ENCODE measurements at regions of chr6 and their contacts with region 1.

Region 1: DNA sequence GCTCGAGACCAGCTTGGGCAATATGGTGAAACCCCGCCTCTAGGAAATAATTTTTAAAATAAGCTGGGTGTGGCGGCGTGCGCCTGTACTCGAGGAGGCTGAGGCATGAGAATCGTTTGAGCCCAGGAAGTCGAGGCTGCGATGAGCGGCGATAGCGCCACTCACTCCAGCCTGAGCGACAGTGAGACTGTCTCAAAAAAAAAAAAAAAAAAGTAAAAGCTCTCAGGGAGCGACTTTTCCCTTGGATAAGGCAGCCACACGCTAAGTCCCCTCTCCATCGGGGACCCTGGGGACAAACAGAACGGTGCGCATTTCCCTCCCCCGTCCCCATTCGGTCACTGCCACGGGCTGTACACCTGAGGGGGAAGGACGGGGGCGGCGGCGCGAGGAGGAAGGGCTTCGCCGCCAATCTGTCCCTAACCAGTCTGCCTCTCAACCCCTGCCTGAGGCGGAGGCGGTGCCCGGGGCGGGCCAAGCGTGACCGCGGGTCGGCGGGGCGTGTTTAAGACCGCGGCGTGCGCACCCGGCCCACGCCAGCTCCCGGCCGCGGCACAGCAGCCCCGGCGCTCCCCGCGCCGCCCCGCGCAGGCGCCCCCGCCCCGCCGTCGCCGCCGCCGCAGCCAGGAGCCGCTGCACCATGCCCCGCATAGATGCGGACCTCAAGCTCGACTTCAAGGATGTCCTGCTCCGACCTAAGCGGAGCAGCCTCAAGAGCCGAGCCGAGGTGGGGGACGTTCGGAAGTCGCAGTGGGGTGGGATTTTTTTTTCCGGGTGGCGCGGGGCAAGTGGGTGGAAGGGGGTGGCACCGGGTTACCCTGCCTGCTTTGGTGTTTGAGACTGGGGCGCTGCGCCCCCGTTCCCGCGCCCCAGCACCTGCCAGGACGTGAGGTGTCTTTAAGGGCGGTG is at the start of gene GMPR:
- DNase-seq: no peak
- H3K4me3 Mint-ChIP-seq: peak within 1 kb of the TSS; percentile 79
- H3K27ac Mint-ChIP-seq: peak within 1 kb of the TSS; percentile 87
- H3K4me1 Mint-ChIP-seq: peaks cover 32% of the 10 kb centered on the region
- H3K27me3 Mint-ChIP-seq: no peaks in the 10 kb centered on the region
- CTCF ChIP-seq: no peak
- total RNA-seq, gene GMPR: 1.9 and 3.0 TPM in 2 replicates

Region 2: GRCh38 chr6:16206595-16207037 is 31.7 kb before region 1 on chr6:
- CTCF ChIA-PET with region 1: interaction called, 19 read pairs
- POLR2A ChIA-PET with region 1: no interaction called
- intact Hi-C with region 1: no loop called
- DNase-seq: peak; percentile 60
- H3K4me3 Mint-ChIP-seq: no peak overlapping the region
- H3K27ac Mint-ChIP-seq: no peak overlapping the region
- H3K4me1 Mint-ChIP-seq: peaks cover 4% of the 10 kb centered on the region
- H3K27me3 Mint-ChIP-seq: peaks cover 13% of the 10 kb centered on the region
- CTCF ChIP-seq: peak; percentile 76

Region 3: DNA sequence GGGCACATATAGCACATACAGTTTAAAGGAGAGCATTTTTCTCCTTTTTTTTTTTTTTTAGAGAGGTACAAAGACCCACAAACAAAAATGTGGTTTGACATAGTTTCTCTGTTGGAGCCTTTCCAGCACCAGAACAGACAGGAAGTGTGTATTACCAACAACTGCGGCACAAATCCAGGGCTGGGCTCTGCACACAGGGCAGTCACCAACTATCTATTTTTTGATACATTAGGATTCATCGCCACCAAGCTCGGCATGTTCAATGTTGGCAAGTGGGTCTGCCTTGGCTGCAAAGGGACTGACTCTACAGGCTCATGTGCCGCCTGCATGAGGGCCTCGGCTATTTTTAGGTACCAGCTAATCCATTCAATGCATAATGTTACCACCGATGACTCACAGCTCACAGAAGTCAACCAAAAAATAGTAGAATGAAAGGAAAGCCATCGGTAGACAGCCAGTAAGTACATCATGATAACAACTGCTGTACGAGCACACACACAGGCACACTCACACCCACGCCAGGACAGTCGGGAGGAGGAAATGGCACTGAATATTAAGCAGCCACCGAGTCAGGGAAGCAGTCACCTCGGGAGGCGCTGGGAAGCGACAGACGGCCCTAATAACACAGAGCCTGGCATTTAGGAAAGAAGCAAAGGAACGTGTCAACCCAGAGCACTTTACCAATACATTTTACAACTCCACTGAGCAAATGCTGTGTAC is 81.7 kb after region 1 on chr6:
- CTCF ChIA-PET with region 1: interaction called, 4 read pairs
- POLR2A ChIA-PET with region 1: no interaction called
- intact Hi-C with region 1: loop called (anchors 5 kb)
- DNase-seq: peak; percentile 81
- H3K4me3 Mint-ChIP-seq: peak overlapping the region; percentile 51
- H3K27ac Mint-ChIP-seq: no peak overlapping the region
- H3K4me1 Mint-ChIP-seq: peaks cover 23% of the 10 kb centered on the region
- H3K27me3 Mint-ChIP-seq: no peaks in the 10 kb centered on the region
- CTCF ChIP-seq: no peak

Region 4: DNA sequence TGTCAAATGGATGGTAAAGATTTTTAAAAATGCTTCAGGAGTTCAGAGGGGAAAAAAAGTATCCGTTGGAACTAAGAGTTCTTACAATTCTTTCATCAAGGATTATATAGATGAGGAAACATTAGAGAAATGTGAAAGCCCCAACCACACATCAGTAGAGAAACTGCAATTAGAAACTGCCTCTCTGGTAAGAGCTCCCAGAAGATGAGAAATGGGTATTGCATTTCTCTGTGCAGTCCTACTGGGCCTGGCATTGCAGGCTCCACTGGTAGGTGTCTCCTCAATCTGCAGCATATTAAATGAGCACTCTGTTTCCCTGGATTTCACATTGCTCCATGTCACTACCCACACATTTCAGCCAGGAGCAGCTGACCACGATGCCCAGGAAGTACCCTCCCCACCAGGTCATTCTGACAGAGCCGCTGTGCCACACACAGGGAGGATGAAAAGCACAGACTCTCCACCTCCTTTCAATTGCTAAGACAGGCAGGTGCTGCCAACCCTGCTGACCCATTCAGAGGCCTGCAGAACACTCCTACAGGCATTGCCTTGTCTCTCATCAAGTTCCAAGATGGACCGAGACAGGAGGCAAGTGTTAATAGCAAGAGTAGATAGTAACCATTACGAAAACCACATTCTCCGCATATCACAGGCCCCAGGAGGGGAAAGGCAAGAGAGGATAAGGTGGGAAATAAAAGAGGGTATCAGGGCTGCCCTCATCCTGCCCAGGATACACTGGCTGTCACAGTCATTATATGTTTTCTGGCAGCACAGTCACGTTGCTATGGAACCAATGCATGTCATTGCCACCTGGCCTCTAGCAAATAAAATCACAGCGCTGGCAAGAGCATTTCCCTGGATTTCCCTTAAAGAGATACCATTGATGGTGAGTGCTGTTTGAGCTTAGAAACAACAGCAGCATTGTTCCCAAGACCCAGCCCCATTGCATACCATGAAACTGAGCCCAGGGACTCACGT is 281.2 kb after region 1 on chr6:
- CTCF ChIA-PET with region 1: no interaction called
- POLR2A ChIA-PET with region 1: no interaction called
- intact Hi-C with region 1: no loop called
- DNase-seq: no peak
- H3K4me3 Mint-ChIP-seq: no peak overlapping the region
- H3K27ac Mint-ChIP-seq: no peak overlapping the region
- H3K4me1 Mint-ChIP-seq: peaks cover 10% of the 10 kb centered on the region
- H3K27me3 Mint-ChIP-seq: no peaks in the 10 kb centered on the region
- CTCF ChIP-seq: no peak

Measured in MCF 10A (cell line).